ENCODE measurements at regions of chr6 and their contacts with region 1.

Region 1: GRCh38 chr6:13355043-13355951 is 27.0 kb upstream of the TBC1D7 start:
- DNase-seq: peak; percentile 92
- H3K4me3 ChIP-seq: peak overlapping the region in 1 of 3 experiments; percentile 3
- H3K27ac ChIP-seq: peak overlapping the region; percentile 84
- H3K4me1 ChIP-seq: peaks cover 40% of the 10 kb centered on the region
- H3K27me3 ChIP-seq: no peaks in the 10 kb centered on the region
- CTCF ChIP-seq: no peak

Region 2: GRCh38 chr6:12844290-12845223 is 510.7 kb before region 1 on chr6:
- CTCF ChIA-PET with region 1: no interaction called
- dilution Hi-C with region 1: no loop called
- in situ Hi-C with region 1: no loop called
- intact Hi-C with region 1: no loop called
- DNase-seq: no peak
- H3K4me3 ChIP-seq: no peak overlapping the region
- H3K27ac ChIP-seq: no peak overlapping the region
- H3K4me1 ChIP-seq: no peaks in the 10 kb centered on the region
- H3K27me3 ChIP-seq: peaks cover 2% of the 10 kb centered on the region
- CTCF ChIP-seq: peak; percentile 42 to 59

Region 3: DNA sequence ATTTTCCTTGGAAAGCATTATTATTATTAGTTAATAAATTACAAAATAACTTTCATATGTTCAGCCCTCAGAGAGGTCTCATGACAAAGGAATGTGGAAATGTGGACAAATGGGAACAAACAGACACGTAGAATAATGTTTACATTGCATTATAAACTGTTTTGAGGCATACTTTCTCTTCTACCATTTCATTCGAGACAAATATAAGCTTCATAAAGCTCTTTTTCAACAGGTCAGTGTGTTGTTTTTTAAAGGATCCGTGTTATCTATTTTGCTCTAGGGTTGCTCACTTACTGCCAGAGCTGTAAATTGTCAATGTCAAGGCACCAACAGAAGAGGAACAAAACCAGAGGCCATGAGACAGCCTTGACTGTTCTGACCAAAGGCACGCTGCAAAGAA is 381.9 kb before region 1 on chr6:
- CTCF ChIA-PET with region 1: no interaction called
- dilution Hi-C with region 1: no loop called
- in situ Hi-C with region 1: no loop called
- intact Hi-C with region 1: no loop called
- DNase-seq: no peak
- H3K4me3 ChIP-seq: no peak overlapping the region
- H3K27ac ChIP-seq: no peak overlapping the region
- H3K4me1 ChIP-seq: no peaks in the 10 kb centered on the region
- H3K27me3 ChIP-seq: no peaks in the 10 kb centered on the region
- CTCF ChIP-seq: no peak

Region 4: DNA sequence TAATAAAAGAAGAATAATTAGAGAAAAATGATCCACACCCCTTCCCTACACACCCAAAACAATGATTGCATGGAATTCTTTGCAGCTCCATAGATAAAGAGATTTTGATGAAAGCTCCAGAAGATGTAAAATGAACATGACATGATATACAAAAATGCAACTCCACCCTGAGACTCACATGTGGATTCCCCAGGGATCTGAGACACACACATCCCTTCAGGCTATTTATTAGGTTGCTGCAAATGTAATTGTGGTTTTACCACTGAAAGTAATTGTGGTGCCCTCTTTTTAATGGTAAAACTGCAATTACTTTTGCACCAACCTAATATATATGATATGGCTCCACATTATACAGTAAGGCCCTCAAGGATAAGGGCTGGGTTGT is 13.4 kb after region 1 on chr6:
- CTCF ChIA-PET with region 1: no interaction called
- dilution Hi-C with region 1: no loop called
- in situ Hi-C with region 1: no loop called
- intact Hi-C with region 1: loop called (anchors 1 kb)
- DNase-seq: peak; percentile 78
- H3K4me3 ChIP-seq: no peak overlapping the region
- H3K27ac ChIP-seq: no peak overlapping the region
- H3K4me1 ChIP-seq: peaks cover 25% of the 10 kb centered on the region
- H3K27me3 ChIP-seq: no peaks in the 10 kb centered on the region
- CTCF ChIP-seq: no peak

Region 5: DNA sequence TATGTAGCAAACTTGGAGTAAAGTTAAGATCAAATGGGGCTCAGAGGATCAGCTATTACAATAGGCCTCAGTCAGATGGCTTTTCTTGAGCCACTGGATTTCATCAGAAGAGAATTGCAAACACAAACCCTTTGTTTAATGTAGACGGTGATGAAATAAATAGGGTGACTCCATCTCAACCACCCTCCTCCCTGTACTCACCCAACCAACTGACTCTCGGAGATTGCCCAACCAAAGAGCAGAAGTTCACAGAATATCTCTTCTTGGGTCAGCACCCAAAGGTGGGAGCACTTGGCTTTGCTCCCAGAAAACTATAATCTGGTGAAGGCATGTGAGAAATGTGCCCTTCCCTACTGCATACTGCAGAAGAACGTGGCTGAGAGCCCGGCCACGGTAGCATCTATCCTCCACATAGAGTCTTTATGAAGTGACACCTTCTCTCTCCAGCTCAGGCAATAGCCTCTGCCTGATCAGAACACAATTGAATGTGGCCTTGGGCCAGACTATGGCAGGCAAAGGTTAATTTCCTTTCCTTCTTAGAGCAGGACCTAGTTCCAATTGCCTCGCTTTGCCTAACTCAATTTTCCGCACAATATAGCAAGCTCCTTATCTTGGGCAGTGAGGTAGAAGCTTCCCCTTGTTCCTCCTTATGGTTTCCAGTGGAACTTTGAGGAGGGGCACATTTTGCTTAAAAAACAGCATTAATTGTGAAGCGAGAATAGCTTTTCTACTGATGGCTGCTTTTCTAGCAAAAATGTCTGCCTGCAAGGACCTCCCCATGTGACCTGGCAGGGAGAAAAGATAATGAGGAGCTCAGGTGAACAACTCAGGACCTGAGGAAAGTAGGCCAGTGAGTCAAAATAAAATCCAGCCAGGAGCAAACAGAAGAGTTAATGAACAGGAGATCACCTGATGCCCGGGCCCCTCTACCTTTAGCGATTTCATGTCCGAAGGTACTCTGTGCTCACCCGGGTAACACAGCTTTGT is 52.7 kb after region 1 on chr6:
- CTCF ChIA-PET with region 1: no interaction called
- dilution Hi-C with region 1: no loop called
- in situ Hi-C with region 1: no loop called
- intact Hi-C with region 1: loop called (anchors 1 kb)
- DNase-seq: peak; percentile 99
- H3K4me3 ChIP-seq: no peak overlapping the region
- H3K27ac ChIP-seq: peak overlapping the region; percentile 96
- H3K4me1 ChIP-seq: peaks cover 32% of the 10 kb centered on the region
- H3K27me3 ChIP-seq: no peaks in the 10 kb centered on the region
- CTCF ChIP-seq: no peak

Region 6: DNA sequence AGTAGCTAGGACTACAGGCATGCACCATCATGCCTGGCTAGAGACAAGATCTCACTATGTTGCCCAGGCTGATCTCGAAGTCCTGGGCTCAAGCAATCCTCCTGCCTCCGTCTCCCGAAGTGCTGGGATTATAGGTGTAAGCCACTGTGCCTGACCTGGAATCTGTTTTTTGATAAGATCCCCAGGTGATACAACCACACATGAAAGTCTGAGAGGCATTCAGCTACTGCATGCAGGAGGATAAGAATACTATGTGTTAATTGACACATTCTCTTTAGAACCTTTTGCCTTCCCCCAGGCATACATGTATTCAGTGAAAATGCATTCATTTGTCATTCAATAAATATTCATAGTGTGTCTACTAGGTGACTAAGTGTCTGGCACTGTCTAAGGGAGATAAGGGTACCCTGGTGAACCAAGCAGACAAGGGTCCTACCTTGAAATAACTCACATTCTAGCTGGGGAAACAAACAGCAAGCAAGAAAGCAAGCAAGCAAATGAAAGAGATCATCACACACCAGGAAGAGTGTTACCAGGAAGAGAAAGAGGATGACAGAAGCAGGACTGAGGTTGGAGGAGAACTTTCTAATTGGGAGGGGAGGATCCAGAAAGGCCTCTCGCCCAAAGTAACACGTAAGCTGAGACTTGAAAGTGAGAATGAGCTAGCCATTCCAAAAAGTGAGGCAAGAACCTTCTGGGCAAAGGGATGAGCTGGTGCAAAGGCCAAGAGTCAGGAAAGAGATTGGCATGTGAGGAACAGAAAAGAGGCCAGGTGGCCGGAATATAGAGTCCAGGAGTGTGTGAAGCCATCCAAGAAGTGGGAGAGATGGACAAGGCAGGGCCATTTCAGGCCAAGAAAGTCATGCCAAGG is 125.6 kb after region 1 on chr6:
- CTCF ChIA-PET with region 1: no interaction called
- dilution Hi-C with region 1: no loop called
- in situ Hi-C with region 1: no loop called
- intact Hi-C with region 1: loop called (anchors 1 kb)
- DNase-seq: peak; percentile 33
- H3K4me3 ChIP-seq: no peak overlapping the region
- H3K27ac ChIP-seq: peak overlapping the region; percentile 43
- H3K4me1 ChIP-seq: peaks cover 54% of the 10 kb centered on the region
- H3K27me3 ChIP-seq: no peaks in the 10 kb centered on the region
- CTCF ChIP-seq: no peak

Region 7: DNA sequence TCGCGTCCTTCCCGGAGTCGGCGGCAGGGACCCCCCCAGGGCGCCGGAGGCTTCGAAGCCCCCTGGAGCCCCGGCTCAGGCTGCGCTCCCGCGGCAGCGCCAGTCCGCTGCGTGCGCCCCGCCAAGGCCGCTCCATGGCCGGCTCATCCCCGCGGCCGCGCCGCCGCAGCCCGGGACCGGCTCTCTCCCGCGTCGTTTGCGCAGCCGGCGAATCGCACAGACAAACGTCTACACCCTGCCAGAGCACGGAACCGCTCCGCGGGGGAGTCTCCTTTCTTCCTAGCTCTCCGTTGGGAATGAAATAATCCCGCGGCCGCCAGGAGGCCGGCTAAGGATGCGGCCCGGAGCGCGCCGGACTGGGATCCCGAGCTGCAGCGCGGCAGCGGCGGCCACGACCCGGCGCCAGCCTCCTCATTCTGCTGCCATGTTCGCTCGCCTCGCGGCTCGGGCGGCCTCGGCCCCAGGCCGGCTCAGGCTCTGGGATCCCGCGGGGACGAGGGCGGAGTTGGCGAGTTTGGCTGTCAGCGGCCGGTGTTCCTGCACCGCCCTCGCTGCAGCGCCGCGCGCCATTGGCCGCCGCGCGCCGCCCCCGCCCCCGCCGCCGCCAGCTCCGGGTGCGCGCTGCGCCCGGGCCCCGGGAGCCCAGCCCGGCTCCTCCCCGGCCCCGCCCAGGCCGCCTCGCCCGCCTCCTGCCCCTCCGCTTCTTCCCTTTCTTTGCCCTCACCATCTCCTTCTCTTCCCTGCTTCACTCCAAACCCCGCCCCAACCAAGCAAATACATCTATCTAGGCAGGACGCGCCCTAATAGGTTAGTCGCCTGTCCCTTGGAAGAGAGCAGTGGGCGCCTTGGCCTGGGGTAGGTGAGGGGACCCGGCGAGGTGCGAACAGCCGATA is 132.1 kb after region 1 on chr6 and contains the start of gene GFOD1:
- CTCF ChIA-PET with region 1: no interaction called
- dilution Hi-C with region 1: no loop called
- in situ Hi-C with region 1: no loop called
- intact Hi-C with region 1: loop called (anchors 2 kb)
- DNase-seq: peak; percentile 85
- H3K4me3 ChIP-seq: peak within 1 kb of the TSS; percentile 66 to 73 (median 70)
- H3K27ac ChIP-seq: peak within 1 kb of the TSS; percentile 61
- H3K4me1 ChIP-seq: peaks cover 22% of the 10 kb centered on the region
- H3K27me3 ChIP-seq: no peaks in the 10 kb centered on the region
- CTCF ChIP-seq: peak in 1 of 2 donors; percentile 35
- total RNA-seq, gene GFOD1: 12.3 to 37.3 TPM

Region 8: DNA sequence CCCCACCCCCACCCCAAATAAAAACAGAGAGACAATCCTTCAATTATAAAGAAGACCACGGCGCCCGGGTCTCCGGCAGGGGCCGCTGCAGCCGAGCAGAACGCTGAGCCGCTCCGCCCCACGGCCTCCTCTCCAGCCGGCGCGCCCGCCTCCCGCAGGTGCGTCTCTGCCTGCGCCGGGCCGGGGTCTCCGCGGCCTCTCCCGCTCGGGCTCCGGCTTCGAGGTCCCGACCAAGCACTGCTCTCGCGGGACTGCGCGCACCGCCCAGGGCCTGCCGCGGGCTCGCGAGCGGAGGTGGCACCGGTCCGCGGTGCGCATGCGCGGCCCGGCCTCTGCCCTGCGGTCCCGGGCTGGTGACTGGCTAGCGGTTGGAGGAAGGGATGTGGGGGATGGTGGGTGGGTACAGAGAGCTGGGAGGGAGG is 218.9 kb after region 1 on chr6:
- CTCF ChIA-PET with region 1: interaction called, 3 read pairs
- dilution Hi-C with region 1: no loop called
- in situ Hi-C with region 1: no loop called
- intact Hi-C with region 1: loop called (anchors 5 kb)
- DNase-seq: peak; percentile 92
- H3K4me3 ChIP-seq: peak overlapping the region; percentile 61 to 92 (median 77)
- H3K27ac ChIP-seq: peak overlapping the region; percentile 92
- H3K4me1 ChIP-seq: peaks cover 9% of the 10 kb centered on the region
- H3K27me3 ChIP-seq: no peaks in the 10 kb centered on the region
- CTCF ChIP-seq: peak; percentile 15 to 55

Region 9: GRCh38 chr6:13614926-13615798 is 259.9 kb after region 1 on chr6 and contains the start of gene NOL7:
- CTCF ChIA-PET with region 1: no interaction called
- dilution Hi-C with region 1: no loop called
- in situ Hi-C with region 1: no loop called
- intact Hi-C with region 1: loop called (anchors 5 kb)
- DNase-seq: peak; percentile 95
- H3K4me3 ChIP-seq: peak within 1 kb of the TSS; percentile 66 to 85 (median 81)
- H3K27ac ChIP-seq: peak within 1 kb of the TSS; percentile 77
- H3K4me1 ChIP-seq: peaks cover 10% of the 10 kb centered on the region
- H3K27me3 ChIP-seq: no peaks in the 10 kb centered on the region
- CTCF ChIP-seq: peak; percentile 95
- total RNA-seq, gene NOL7: 20.3 to 70.0 TPM